ENCODE measurements at regions of chr17 and their contacts with region 1.

Region 1: GRCh38 chr17:56217921-56218320 is 64.6 kb downstream of the ANKFN1 start:
- DNase-seq: no peak
- H3K4me3 ChIP-seq: no peak overlapping the region
- CTCF ChIP-seq: no peak

Region 2: DNA sequence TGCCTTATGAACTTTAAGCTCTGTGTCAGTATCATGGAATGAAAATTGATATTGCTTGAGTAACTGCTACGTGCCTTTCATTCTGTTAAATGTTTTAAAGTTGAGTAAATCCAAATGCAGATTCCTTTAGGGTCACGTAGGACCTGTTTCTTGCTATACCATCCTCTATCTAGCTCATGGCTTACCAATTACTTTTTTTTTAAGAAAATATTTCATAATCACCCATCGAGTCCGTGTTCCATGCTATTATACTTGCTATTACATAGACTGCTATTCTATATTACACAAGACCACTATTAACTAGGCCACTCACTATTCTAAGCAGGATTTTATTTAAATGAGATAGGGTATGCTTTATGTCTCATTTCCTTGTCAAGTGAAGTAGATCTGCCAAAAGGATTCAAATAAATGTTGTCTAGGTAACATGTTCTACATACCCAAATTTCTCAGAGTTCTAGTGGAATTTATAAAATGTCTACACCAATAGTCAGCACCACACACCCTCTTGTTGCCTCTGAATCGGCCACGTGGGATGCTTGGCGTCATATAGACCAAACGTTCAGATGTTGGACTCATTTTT is 52.8 kb before region 1 on chr17:
- in situ Hi-C with region 1: no loop called
- DNase-seq: no peak
- H3K4me3 ChIP-seq: no peak overlapping the region
- CTCF ChIP-seq: no peak

Region 3: GRCh38 chr17:56269556-56270389 is 51.9 kb after region 1 on chr17:
- in situ Hi-C with region 1: no loop called
- DNase-seq: no peak
- H3K4me3 ChIP-seq: no peak overlapping the region
- CTCF ChIP-seq: no peak

Region 4: DNA sequence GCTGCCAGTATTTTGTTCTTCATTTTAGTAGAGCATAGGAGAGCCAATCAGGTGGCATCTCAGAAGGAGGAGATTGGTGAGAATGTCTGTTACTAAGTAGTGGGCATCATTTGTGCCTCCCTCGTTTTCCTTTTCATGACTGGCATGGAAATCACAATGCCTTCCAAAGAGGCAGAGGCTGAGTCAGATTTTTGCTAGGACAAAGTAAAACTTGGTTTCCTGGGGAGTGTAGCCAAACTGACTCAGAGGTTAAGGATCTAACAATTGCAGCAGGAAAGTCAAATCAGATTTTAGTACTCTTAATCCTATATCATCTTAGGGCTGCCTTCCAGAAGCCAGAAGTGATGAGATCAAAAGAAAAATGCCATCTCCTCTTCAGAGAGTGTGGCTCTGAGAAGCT is 74.1 kb after region 1 on chr17:
- in situ Hi-C with region 1: loop called (anchors 5 kb)
- DNase-seq: peak; percentile 51
- H3K4me3 ChIP-seq: no peak overlapping the region
- CTCF ChIP-seq: no peak